ENCODE measurements at regions of chr2 and their contacts with region 1.

Region 1: GRCh38 chr2:149561309-149561926 is 26.2 kb downstream of the MMADHC start:
- DNase-seq: peak; percentile 57
- H3K4me3 ChIP-seq: no peak overlapping the region
- H3K27ac ChIP-seq: no peak overlapping the region
- H3K4me1 ChIP-seq: no peaks in the 10 kb centered on the region
- H3K27me3 ChIP-seq: no peaks in the 10 kb centered on the region
- CTCF ChIP-seq: peak; percentile 93

Region 2: DNA sequence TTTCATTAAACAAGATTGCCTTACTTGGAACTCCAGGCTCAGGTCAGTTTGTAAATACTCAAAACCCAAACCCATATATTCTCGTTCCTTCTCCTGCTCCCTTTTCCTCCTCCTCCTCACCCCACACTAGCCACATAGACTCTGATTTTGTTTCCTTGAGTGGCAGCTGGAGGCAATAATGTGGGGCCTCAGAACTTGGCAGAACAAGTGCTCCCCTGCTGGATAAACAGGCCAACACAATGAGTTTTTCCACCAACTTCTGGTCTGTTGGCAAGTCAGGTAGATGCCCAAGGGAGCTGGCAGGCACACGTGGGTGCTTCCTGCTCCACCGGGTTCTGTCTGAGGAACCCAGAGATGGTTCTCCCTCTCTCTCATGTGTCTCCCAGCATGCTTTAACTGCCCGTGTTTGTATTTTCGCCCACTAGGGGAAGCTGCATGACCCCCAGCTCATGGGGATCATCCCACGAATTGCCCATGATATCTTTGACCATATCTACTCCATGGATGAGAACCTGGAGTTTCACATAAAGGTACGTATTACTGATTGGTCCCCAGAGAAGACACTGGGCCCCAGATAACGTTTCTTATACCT is 624.5 kb before region 1 on chr2:
- CTCF ChIA-PET with region 1: no interaction called
- POLR2A ChIA-PET with region 1: no interaction called
- intact Hi-C with region 1: loop called (anchors 10 kb)
- DNase-seq: peak; percentile 9
- H3K4me3 ChIP-seq: no peak overlapping the region
- H3K27ac ChIP-seq: no peak overlapping the region
- H3K4me1 ChIP-seq: no peaks in the 10 kb centered on the region
- H3K27me3 ChIP-seq: no peaks in the 10 kb centered on the region
- CTCF ChIP-seq: peak; percentile 33

Region 3: DNA sequence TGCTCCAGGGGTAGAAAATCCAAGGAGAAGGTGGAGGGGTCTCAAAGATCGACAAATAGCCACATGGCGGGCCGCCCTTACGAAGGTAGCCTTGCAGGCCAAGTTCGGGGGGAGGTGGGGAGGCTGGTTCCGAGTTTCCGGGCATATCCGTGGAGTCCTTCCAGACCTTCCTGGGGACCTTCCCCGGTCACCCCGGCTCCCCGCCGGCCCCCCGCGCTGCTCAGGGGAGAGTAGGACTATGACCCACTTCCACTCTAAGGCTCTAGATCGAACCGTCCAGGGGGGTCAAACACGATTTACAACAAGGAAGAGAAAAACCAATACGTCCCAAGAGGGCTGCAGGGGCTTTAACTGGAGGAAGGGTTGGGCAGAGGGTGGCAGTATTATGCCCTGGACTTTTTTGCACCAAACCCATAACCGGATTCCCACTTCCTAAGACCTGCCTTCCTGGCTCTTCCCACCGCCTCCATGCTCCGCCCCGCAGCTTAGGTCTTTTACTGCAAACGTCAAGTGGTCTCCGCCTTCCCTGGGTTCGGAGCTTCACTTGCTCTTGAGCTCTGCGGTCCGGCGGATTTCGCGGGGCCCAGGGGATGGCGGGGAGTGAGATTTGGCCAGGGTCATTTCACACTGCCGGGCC is 231.8 kb before region 1 on chr2:
- CTCF ChIA-PET with region 1: no interaction called
- POLR2A ChIA-PET with region 1: no interaction called
- intact Hi-C with region 1: loop called (anchors 5 kb)
- DNase-seq: peak; percentile 73
- H3K4me3 ChIP-seq: peak overlapping the region; percentile 60
- H3K27ac ChIP-seq: no peak overlapping the region
- H3K4me1 ChIP-seq: peaks cover 4% of the 10 kb centered on the region
- H3K27me3 ChIP-seq: peaks cover 18% of the 10 kb centered on the region
- CTCF ChIP-seq: no peak

Region 4: DNA sequence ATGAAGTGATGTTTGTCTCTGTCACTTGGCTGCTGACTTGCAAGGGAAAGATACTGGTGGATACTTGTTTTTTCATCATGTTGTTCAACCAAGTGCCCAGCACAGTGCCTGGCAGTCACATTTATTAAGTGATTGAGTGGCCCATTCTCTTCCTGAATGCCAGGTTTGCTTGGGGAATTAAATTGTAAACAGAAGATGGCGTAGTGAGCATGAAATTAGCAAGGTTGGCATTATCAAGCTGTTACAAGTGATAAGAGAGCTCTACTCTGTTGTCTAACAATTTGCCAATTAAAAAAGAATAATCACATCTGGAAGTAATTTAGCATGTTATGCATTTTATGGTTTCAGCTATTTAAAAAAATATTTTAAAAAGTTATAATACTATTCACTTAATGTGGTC is 125.8 kb before region 1 on chr2:
- CTCF ChIA-PET with region 1: interaction called, 6 read pairs
- POLR2A ChIA-PET with region 1: no interaction called
- intact Hi-C with region 1: loop called (anchors 2 kb)
- DNase-seq: no peak
- H3K4me3 ChIP-seq: no peak overlapping the region
- H3K27ac ChIP-seq: no peak overlapping the region
- H3K4me1 ChIP-seq: no peaks in the 10 kb centered on the region
- H3K27me3 ChIP-seq: no peaks in the 10 kb centered on the region
- CTCF ChIP-seq: peak; percentile 39; the same call in 1 of the 2 replicates

Measured in A673 (cell line).